Panc1 (cell line): ENCODE measurements at regions of chr12 and their contacts with region 1.

Region 1: DNA sequence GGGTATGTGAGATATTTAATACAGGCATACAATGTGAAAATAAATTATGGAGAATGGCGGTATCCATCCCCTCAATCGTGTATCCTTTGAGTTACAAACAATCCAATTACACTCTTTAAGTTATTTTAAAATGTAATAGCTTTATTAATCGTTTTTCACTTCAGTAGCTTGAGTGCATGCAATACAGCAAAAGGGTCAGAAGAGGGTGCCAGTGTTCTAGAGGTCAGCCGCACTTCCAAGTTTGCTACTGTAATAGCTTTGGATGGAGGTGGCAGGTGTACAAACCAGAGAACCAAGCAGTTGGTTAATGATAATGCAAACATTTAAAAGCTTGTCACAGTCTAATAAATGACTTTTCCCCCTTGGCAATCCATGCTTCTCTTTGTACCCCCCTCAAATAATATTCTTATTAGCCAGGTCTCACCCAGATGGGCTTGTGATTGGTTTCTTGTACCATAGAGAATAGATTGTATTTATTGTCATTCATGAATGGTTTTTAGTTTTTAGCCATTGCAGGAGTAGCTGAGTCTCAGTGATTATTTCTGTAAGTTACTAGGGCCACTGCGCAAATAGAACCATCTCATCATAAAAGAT is 127.0 kb downstream of the ERC1 start:
- DNase-seq: peak; percentile 35
- ATAC-seq: peak; percentile 56; the same call in 1 of the 2 replicates
- H3K4me3 ChIP-seq: no peak overlapping the region
- H3K27ac ChIP-seq: no peak overlapping the region; the same call in 1 of the 2 replicates
- H3K4me1 ChIP-seq: peaks cover 7% of the 10 kb centered on the region
- H3K27me3 ChIP-seq: no peaks in the 10 kb centered on the region
- CTCF ChIP-seq: peak; percentile 87

Region 2: GRCh38 chr12:936377-937345 is 181.4 kb before region 1 on chr12:
- CTCF ChIA-PET with region 1: no interaction called
- POLR2A ChIA-PET with region 1: no interaction called
- in situ Hi-C with region 1: no loop called
- intact Hi-C with region 1: no loop called
- DNase-seq: no peak
- ATAC-seq: no peak
- H3K4me3 ChIP-seq: no peak overlapping the region
- H3K27ac ChIP-seq: no peak overlapping the region
- H3K4me1 ChIP-seq: no peaks in the 10 kb centered on the region
- H3K27me3 ChIP-seq: no peaks in the 10 kb centered on the region
- CTCF ChIP-seq: no peak

Region 3: DNA sequence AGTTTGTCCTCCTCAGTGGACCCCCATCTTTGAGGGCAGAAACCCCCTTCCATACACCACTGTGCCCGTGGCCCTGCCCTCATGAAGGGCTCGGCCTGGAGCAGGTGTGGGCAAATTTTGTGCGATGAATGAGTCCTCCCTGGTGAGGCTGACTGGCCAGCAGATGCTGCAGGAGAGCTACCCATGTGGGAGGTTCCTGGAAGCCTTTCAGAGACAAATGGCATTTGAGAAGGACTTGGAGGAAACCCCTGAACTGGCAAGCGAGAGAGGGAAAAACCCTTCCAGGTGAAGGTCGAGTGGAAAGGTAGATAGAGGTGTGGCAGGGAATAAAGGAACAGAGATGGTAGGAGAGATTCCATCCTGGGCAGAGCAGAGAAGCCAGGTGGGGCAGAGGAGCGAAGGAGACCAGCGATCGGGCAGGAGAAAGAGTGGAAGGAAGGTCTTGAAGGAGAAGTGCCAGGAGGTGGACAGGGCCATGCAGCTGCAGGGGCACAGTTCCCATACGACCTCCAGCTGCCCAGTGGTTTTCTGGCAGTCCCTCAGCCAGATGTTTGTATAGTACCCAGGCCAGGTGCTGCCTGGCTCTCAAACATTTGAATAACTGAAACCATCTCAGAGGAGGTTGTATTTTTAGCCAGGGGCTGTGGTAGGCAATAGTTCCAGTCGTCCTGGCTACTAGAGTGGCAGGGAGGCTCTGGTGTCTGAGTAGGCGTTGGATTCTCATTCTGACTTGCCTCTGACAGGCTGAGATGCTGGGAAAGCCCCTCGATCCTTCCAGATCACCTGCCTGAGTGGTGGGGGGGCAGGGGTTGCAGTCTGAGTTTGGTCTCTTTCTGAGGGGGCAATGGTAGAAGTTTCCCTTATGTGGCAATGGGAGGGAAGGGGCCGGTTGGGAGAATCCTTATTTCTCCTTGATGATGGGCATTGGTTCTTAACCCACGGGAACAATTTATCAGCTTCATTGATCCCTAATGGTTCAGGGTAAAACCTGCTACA is 436.2 kb after region 1 on chr12:
- CTCF ChIA-PET with region 1: no interaction called
- POLR2A ChIA-PET with region 1: interaction called, 11 read pairs
- in situ Hi-C with region 1: no loop called
- intact Hi-C with region 1: no loop called
- DNase-seq: no peak
- ATAC-seq: peak; percentile 26; the same call in 1 of the 2 replicates
- H3K4me3 ChIP-seq: no peak overlapping the region
- H3K27ac ChIP-seq: no peak overlapping the region
- H3K4me1 ChIP-seq: peaks cover 11% of the 10 kb centered on the region
- H3K27me3 ChIP-seq: no peaks in the 10 kb centered on the region
- CTCF ChIP-seq: no peak

Region 4: GRCh38 chr12:1576410-1577241 is 458.6 kb after region 1 on chr12:
- CTCF ChIA-PET with region 1: interaction called, 10 read pairs
- POLR2A ChIA-PET with region 1: no interaction called
- in situ Hi-C with region 1: no loop called
- intact Hi-C with region 1: loop called (anchors 5 kb)
- DNase-seq: no peak
- ATAC-seq: peak; percentile 68
- H3K4me3 ChIP-seq: peak overlapping the region in 1 of 2 experiments; percentile 46; a peak in 3 of 4 replicates
- H3K27ac ChIP-seq: peak overlapping the region; percentile 77
- H3K4me1 ChIP-seq: peaks cover 42% of the 10 kb centered on the region
- H3K27me3 ChIP-seq: no peaks in the 10 kb centered on the region
- CTCF ChIP-seq: no peak

Region 5: GRCh38 chr12:1583421-1584078 is 465.5 kb after region 1 on chr12:
- CTCF ChIA-PET with region 1: interaction called, 31 read pairs
- POLR2A ChIA-PET with region 1: no interaction called
- in situ Hi-C with region 1: no loop called
- intact Hi-C with region 1: loop called (anchors 5 kb)
- DNase-seq: no peak
- ATAC-seq: peak; percentile 61; the same call in 1 of the 2 replicates
- H3K4me3 ChIP-seq: no peak overlapping the region
- H3K27ac ChIP-seq: peak overlapping the region; percentile 51
- H3K4me1 ChIP-seq: peaks cover 47% of the 10 kb centered on the region
- H3K27me3 ChIP-seq: no peaks in the 10 kb centered on the region
- CTCF ChIP-seq: peak; percentile 80